Right ventricle myocardium inferior (tissue), 1 donor: ENCODE measurements at regions of chr18 and their contacts with region 1.

Region 1: DNA sequence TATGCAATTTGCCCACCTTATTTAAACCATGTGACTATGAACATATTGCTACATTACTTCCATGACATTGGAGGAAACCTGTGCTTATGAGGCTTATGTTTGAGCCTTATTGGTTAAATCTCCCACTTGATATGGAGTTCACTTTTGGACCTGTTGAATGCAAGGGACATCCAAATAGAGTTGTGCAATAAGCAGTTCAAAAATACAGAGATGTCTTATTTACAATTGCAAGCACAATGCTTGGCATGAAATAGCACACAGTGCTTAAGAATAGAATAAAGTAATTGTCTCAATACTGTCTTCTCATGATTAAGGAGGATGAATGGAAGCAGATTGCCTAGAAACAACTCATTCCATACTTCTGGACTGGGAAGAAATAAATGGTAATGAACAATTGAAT is 793.5 kb downstream of the METTL4 start:
- DNase-seq: no peak
- ATAC-seq: peak; percentile 30

Region 2: DNA sequence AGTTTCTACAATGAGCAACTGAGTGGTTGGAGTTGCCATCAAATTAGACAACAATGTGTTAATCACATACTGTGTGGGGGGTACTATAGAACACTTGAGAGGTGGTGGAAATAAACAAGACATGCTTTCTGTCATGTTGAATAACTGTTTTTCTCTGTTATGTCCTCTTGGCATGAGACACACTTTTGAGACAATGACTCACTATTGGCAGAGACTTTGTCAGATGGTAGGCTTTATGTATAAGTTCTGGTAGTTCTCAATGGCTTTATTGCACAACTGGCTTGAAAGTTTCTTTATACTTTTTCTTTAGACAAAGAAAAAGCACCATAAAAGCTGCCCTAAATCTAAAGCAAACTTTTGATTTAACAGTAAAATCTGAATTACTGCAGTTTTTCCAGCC is 294.5 kb before region 1 on chr18:
- intact Hi-C with region 1: no loop called
- DNase-seq: no peak
- ATAC-seq: no peak

Region 3: DNA sequence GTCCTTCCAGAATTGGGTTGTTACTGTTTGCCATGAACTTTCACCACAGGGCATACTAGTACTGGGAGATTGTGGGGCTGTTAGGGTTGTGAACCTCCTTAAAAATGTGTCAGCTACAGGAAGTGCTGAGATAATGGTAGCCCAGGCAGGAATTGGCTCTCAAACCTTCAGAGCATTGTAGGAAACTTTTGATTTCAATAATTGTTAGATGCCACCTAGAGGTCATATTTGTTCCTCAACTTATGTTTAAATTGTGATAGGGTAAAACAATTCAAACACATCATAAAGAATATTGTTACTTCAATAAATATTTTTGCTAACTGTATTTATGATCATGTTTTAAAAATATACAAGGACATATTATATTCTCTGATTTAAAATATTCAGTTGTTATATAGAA is 278.6 kb before region 1 on chr18:
- intact Hi-C with region 1: no loop called
- DNase-seq: no peak
- ATAC-seq: no peak

Region 4: DNA sequence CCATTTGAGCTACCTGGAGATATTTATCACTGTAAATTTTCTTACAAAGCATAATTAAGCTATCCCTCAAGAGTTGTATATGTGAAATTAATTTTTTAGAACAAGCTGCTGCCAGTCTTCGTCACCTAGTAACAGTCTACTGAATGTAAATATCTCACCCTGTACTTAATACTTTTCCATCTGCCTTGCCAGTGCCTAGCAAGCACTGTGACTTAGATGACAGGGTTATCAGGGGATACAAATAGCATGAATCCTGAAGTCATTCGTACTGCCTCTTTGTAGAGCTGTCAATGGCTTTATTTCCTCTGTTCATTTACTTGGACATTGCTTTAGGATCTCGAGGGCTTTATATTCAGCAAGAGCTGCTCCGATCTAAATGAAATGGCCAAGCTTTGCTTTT is 109.6 kb before region 1 on chr18:
- intact Hi-C with region 1: loop called (anchors 1 kb)
- DNase-seq: no peak
- ATAC-seq: peak; percentile 91